Gastrocnemius medialis (tissue), 4 donors: ENCODE measurements at regions of chr11 and their contacts with region 1.

Region 1: DNA sequence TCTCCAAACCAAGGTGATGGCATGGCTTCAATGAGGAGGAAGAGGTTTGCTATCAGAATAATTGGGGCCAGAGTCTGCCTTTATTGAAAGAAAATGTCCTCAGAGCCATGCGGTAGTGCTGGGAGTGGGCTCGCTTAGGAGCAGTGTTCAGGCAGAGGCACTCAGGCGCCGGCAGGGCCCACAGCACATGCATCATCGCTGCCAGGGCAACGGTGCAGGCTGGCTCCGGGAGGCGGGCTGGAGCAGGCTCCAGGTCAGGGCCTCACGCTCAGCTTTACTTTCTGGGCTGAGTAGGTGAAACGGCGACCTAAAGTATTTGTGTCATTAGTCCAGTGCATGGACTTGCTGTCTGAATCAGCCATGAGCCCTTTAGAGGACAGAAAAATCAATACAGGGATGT is 169.9 kb upstream of the CCDC90B start:
- DNase-seq: no peak
- ATAC-seq: no peak
- H3K4me3 ChIP-seq: no peak overlapping the region
- H3K27ac ChIP-seq: no peak overlapping the region
- H3K4me1 ChIP-seq: no peaks in the 10 kb centered on the region
- H3K27me3 ChIP-seq: no peaks in the 10 kb centered on the region
- CTCF ChIP-seq: no peak
- POLR2A ChIP-seq: no peak

Region 2: DNA sequence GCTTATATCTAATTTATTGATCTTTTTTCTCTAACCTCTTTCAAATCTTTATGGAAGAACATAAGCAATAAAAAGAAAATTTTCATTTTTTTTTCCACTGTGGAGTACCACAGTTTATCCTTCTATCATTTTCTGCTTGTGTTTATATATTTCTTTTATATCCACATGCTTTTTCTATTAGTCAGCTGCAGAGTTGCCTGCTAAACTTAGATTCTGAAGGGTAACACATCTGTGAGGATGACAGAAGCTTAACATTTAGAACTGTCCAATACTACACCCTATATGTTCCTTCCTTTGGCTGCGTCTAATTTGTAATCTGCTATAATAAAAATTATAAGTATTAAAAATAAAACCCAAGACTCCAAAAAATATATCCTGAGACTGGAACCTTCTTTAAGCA is 190.7 kb before region 1 on chr11:
- in situ Hi-C with region 1: no loop called
- intact Hi-C with region 1: no loop called
- DNase-seq: no peak
- ATAC-seq: no peak
- H3K4me3 ChIP-seq: no peak overlapping the region
- H3K27ac ChIP-seq: no peak overlapping the region
- H3K4me1 ChIP-seq: peaks cover 2 to 4% of the 10 kb centered on the region in 2 donors
- H3K27me3 ChIP-seq: no peaks in the 10 kb centered on the region
- CTCF ChIP-seq: no peak
- POLR2A ChIP-seq: no peak

Region 3: DNA sequence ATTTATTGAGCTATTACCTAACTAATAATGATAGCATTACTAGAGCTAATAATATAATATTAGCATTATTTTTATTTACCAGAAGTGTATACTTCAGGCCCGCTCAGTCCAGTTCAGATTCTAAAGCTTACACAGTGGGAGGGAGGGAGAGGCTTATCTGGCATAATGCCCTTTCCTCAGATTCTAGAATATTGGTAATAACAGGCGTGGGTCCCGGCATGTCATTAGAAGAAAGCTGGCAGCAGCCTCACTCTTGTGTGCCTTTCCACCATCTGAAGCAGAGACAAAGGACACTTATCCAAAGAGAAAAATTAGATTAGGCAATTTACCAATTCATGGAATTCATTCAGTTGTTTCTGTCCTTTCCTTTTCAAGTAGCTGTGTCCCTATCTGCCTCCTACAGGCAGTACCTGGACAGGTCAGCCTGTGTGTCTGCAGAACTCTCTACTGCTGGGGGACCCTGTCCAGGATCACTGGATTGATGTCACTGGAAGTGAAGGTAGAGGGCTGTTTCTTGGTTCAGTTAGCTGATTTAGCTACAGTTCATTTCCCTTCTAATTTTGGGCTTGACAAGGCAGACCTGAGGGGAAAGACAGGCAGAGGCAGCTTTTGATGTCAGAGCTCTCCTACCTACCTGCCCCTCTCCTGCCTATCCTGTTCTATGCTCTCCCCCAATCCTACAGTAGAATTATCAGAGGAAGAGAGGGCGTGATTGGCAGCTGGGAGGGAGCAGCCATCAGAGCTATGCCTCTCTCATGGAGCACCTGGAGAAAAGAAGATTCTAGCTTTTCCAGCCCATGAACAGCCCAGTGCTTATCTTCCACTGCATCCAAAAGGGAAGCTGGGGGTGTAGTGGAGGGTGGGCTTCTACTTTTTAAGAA is 149.6 kb before region 1 on chr11:
- in situ Hi-C with region 1: loop called in 1 of 4 experiments (anchors 25 kb)
- intact Hi-C with region 1: no loop called
- DNase-seq: no peak
- ATAC-seq: no peak
- H3K4me3 ChIP-seq: no peak overlapping the region
- H3K27ac ChIP-seq: no peak overlapping the region
- H3K4me1 ChIP-seq: no peaks in the 10 kb centered on the region
- H3K27me3 ChIP-seq: no peaks in the 10 kb centered on the region
- CTCF ChIP-seq: no peak
- POLR2A ChIP-seq: no peak

Region 4: DNA sequence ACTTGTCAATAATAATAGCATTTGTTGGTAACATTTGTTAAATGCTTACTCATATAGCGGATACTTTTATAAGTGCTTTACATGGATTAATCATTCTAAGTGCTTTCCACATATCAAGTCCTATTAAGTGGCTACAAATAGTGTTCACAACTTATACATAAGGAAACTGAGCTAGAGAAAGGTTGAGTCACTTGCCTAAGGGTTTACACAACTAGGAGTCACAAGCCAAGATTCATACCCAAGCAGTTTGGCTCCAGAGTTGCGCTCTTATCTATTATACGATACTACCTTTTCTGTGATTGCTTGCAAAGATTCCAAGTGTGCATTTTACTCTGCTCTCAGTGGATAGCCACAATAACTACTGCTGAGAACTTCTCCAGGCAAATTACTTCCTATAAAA is 46.0 kb after region 1 on chr11:
- in situ Hi-C with region 1: loop called in 1 of 4 experiments (anchors 5 kb)
- intact Hi-C with region 1: no loop called
- DNase-seq: no peak
- ATAC-seq: no peak
- H3K4me3 ChIP-seq: no peak overlapping the region
- H3K27ac ChIP-seq: no peak overlapping the region
- H3K4me1 ChIP-seq: no peaks in the 10 kb centered on the region
- H3K27me3 ChIP-seq: no peaks in the 10 kb centered on the region
- CTCF ChIP-seq: no peak
- POLR2A ChIP-seq: no peak